GM10248 (cell line): ENCODE measurements at regions of chr4 and their contacts with region 1.

Region 1: DNA sequence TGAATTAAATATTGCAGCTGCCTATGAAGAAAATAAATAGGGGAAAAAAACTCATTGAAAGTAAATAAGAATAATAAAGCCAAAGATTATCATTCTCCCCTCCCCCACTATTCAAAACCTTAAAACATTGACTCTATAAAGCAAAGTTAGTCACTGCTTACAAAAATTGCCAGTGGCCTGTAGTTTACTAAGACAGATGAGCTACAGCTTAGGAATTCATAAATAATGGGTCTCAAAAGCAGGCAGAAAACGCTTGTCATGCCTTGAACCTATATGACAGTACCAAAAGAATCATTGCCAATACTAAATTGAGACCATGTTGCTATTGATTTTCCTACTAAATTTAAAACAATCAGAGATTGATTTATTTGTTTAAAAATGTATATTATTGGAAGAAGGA is 78.9 kb downstream of the SLC10A7 start:
- DNase-seq: no peak
- CTCF ChIP-seq: no peak

Region 2: DNA sequence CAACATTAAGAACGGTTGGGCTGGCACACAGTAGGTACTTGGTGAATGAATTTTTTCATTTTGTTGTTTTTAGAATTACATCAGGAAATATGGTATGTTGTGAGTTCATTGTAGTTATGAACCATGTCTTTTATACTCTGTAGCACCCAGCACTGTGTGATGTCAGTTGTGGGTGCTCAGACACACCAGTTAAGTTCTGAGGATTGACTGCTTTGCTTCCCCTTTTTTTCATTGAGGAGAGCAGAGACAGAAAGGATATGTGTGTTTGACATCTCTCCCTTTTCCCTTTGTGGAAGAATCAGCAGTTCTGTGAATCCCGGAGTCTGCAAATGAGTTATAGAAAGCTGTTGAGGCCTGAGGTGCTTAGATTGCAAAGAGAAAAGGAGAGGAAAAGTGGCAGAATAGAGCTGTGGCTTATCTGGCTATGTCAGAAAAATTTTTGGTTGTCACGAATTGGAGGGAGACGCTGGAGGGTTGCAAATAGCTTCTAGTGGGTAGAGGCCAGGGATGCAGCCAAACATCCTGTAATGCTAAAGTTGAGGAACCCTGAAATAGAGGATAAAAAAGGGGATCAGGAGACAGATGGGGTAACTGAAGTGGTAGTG is 948.0 kb before region 1 on chr4:
- CTCF ChIA-PET with region 1: no interaction called
- POLR2A ChIA-PET with region 1: no interaction called
- DNase-seq: no peak
- CTCF ChIP-seq: no peak

Region 3: GRCh38 chr4:146310319-146311021 is 132.3 kb before region 1 on chr4:
- CTCF ChIA-PET with region 1: no interaction called
- POLR2A ChIA-PET with region 1: no interaction called
- DNase-seq: no peak
- CTCF ChIP-seq: no peak

Region 4: DNA sequence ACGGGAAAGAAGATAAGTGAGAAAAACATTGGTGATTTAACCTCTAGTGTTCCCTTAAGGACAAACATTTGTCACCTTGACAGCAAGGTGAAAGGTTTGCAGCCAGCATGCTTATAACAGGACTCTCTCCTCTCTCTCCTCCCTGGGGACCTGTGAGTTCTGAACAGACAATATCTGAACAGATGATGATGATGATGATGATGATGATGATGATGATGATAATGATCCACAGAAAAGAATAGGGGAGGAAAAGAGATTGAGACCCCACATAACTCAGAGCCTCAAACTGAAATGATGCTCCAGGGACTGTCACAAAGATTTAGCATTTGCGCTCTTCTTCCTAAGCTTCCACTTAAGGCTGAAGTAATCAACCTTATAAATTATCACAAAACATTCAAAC is 25.0 kb before region 1 on chr4:
- CTCF ChIA-PET with region 1: no interaction called
- POLR2A ChIA-PET with region 1: no interaction called
- DNase-seq: no peak
- CTCF ChIP-seq: no peak

Region 5: DNA sequence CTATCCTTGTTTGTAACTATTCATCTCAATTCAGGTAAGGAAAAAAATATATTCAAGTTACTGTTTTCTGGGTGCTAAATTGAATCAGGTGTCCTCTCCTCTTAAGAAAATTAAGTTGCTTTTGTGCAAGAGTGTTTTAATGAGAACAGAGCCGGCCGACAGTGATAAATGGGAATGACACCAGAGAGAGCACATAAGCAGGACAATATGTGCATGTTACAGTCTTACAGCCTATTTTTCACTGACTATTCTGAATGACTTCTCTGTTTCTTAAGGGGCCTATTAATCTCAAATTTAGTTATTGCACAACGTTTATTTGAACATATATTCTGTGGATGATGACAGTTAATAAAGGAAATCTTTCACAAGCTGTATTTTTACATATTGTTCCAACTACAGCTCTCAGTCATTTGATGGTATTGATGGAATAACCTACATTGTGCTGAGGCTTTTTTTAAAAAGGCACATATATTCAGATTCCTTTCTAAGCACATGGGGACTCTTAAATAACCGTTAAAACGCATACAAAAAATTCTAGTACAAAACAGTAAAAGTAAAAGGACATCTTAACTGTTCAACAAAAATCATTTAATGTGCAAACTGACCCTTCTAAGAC is 10.5 kb after region 1 on chr4:
- CTCF ChIA-PET with region 1: interaction called, 11 read pairs
- POLR2A ChIA-PET with region 1: no interaction called
- DNase-seq: no peak
- CTCF ChIP-seq: no peak